ENCODE measurements at regions of chr10 and their contacts with region 1.

Region 1: GRCh38 chr10:79127151-79127961 is 58.6 kb downstream of the ZMIZ1 start:
- DNase-seq: peak; percentile 100
- ATAC-seq: peak; percentile 90
- H3K4me3 ChIP-seq: no peak overlapping the region
- H3K27ac ChIP-seq: peak overlapping the region; percentile 62
- H3K4me1 ChIP-seq: peaks cover 41% of the 10 kb centered on the region
- H3K27me3 ChIP-seq: no peaks in the 10 kb centered on the region
- CTCF ChIP-seq: peak; percentile 54; the same call in 1 of the 2 replicates

Region 2: DNA sequence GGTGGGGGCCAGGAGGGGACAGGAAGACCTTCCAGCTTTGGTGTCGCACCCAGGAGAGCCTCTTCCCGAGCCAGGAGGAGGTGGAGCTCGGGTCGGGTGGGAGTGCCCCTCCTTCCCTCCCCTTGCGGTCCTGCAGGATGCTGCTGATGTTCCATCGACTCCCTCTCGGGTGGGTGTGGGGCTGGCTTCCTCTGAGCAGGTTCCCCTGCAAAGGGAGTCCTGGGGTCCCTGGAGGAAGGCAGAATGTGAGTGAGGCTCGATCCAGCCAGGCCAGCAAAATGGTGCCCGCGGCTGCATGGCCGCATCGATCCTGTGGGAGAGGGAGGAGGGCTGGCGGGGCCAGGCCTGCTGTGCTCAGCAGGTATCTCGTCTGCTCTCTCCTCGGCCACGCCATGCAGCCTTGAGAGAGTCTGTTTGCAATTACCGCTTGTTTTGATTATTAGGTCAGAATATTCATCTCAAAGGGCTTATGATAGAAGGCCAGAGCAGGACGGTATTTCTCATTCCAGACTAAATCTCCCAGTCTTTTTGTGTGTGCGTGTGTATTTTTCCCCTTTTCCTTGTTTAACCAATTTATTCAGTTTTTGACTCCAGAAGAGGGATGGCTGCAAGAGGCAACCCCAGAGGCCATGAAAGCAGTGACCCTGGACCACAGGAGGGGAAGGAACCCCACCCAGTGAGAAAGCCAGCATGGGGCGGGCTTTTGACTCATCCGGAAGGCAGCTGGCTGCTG is 195.9 kb before region 1 on chr10:
- CTCF ChIA-PET with region 1: no interaction called
- POLR2A ChIA-PET with region 1: no interaction called
- intact Hi-C with region 1: no loop called
- DNase-seq: peak; percentile 92
- ATAC-seq: peak; percentile 47
- H3K4me3 ChIP-seq: no peak overlapping the region
- H3K27ac ChIP-seq: no peak overlapping the region
- H3K4me1 ChIP-seq: peaks cover 35% of the 10 kb centered on the region
- H3K27me3 ChIP-seq: no peaks in the 10 kb centered on the region
- CTCF ChIP-seq: no peak

Region 3: GRCh38 chr10:79101560-79102497 is 25.5 kb before region 1 on chr10:
- CTCF ChIA-PET with region 1: interaction called, 3 read pairs
- POLR2A ChIA-PET with region 1: no interaction called
- intact Hi-C with region 1: loop called (anchors 2 kb)
- DNase-seq: no peak
- ATAC-seq: peak; percentile 18
- H3K4me3 ChIP-seq: no peak overlapping the region
- H3K27ac ChIP-seq: no peak overlapping the region
- H3K4me1 ChIP-seq: no peaks in the 10 kb centered on the region
- H3K27me3 ChIP-seq: no peaks in the 10 kb centered on the region
- CTCF ChIP-seq: no peak

Region 4: GRCh38 chr10:79155301-79156081 is 28.1 kb after region 1 on chr10:
- CTCF ChIA-PET with region 1: interaction called, 3 read pairs
- POLR2A ChIA-PET with region 1: no interaction called
- intact Hi-C with region 1: loop called (anchors 1 kb)
- DNase-seq: peak; percentile 93
- ATAC-seq: no peak
- H3K4me3 ChIP-seq: no peak overlapping the region
- H3K27ac ChIP-seq: peak overlapping the region; percentile 47
- H3K4me1 ChIP-seq: peaks cover 82% of the 10 kb centered on the region
- H3K27me3 ChIP-seq: no peaks in the 10 kb centered on the region
- CTCF ChIP-seq: no peak

Region 5: GRCh38 chr10:79184145-79184625 is 56.8 kb after region 1 on chr10:
- CTCF ChIA-PET with region 1: interaction called, 5 read pairs
- POLR2A ChIA-PET with region 1: no interaction called
- intact Hi-C with region 1: loop called (anchors 1 kb)
- DNase-seq: peak; percentile 100
- ATAC-seq: peak; percentile 95
- H3K4me3 ChIP-seq: peak overlapping the region; percentile 2; the same call in 1 of the 2 replicates
- H3K27ac ChIP-seq: peak overlapping the region; percentile 67
- H3K4me1 ChIP-seq: peaks cover 35% of the 10 kb centered on the region
- H3K27me3 ChIP-seq: no peaks in the 10 kb centered on the region
- CTCF ChIP-seq: no peak